T-cell (primary cell): ENCODE measurements at regions of chr7 and their contacts with region 1.

Region 1: DNA sequence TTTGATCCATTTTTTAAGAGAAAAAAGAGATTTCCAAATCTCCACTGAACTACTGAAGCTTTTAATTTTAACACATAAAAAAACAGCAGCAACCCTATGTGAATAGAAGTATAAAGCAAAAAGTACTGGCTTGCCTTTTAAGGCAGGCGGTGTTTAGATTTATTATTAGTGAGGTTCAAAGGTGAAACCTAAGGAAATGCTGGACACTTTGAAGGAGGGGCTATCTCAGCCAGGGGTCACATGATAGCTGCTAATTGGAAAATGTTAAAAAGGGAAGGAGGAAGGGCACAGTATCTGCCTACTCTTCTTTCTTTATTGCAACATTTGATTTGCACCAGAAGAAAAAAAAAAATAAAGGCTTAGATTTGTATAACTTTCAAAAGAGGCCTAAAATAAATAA is 183.8 kb downstream of the SKAP2 start:
- DNase-seq: no peak
- ATAC-seq: no peak
- H3K4me3 ChIP-seq: no peak overlapping the region
- H3K4me3 Mint-ChIP-seq: no peak overlapping the region
- H3K27ac ChIP-seq: no peak overlapping the region
- H3K27ac Mint-ChIP-seq: no peak overlapping the region
- H3K4me1 ChIP-seq: no peaks in the 10 kb centered on the region
- H3K4me1 Mint-ChIP-seq: no peaks in the 10 kb centered on the region
- H3K27me3 ChIP-seq: peaks cover 0 to 4% of the 10 kb centered on the region in 2 experiments
- H3K27me3 Mint-ChIP-seq: peaks cover 20 to 28% of the 10 kb centered on the region in 2 donors

Region 2: DNA sequence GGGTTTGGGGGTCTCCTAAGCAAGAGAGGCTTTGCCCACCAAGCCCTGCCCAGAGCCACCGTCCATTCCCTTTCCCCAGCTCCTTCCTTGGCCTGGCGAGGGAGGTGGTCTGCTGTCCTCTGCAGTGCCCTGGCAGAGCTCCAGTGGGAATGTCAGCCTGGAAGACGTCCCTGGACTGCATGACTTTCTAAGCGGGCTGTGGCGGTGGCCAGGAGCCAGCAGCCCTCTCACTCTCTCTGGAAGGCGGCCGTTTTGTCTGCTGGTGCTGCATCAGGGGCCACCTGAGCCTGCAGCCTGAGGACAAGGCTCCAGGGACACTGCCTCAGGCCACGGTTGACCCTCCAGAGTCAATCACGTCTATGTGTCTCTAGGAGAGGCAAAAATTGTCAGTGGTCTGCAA is 87.2 kb before region 1 on chr7:
- CTCF ChIA-PET with region 1: no interaction called
- POLR2A ChIA-PET with region 1: no interaction called
- DNase-seq: no peak
- ATAC-seq: no peak
- H3K4me3 ChIP-seq: no peak overlapping the region
- H3K4me3 Mint-ChIP-seq: no peak overlapping the region
- H3K27ac ChIP-seq: no peak overlapping the region
- H3K27ac Mint-ChIP-seq: no peak overlapping the region
- H3K4me1 ChIP-seq: no peaks in the 10 kb centered on the region
- H3K4me1 Mint-ChIP-seq: no peaks in the 10 kb centered on the region
- H3K27me3 ChIP-seq: peaks cover 0 to 9% of the 10 kb centered on the region in 2 experiments
- H3K27me3 Mint-ChIP-seq: peaks cover 2 to 20% of the 10 kb centered on the region in 2 donors

Region 3: DNA sequence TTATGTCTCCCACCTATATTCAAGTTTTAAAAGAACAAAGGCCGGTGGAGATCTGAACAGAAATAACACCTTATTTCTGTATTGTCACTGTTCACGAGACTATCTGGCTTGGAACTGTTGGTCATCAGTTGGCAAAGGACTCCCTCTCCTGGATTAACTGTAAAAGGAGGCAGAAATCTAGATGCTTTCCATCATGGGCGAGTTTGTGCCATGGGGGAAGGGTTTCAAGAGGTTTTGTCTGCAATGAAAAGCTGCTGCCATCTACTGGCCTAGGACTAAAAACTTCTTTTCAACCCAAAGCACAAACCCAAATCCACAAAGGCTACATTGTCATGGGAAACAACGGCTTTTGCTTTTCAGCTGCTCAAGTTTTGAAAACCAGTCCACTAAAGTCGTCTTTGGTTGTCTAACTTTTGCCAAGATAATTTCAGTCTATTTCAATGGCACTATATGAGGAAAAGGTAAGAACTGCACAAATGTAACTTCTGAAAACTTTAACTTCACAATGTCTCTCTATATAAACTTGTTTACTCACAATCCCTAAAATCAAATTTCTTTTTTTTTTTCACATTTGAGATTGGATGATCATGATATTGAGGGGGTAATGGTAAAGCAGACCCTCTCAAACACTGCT is 13.0 kb before region 1 on chr7:
- CTCF ChIA-PET with region 1: interaction called, 7 to 16 read pairs
- POLR2A ChIA-PET with region 1: interaction called in 1 of 2 experiments, 3 read pairs
- DNase-seq: peak in 33 of 35 experiments; percentile 3 to 79 (median 33)
- ATAC-seq: peak in 3 of 4 experiments; percentile 40 to 59 (median 58)
- H3K4me3 ChIP-seq: no peak overlapping the region
- H3K4me3 Mint-ChIP-seq: no peak overlapping the region
- H3K27ac ChIP-seq: no peak overlapping the region
- H3K27ac Mint-ChIP-seq: no peak overlapping the region
- H3K4me1 ChIP-seq: peaks cover 0 to 3% of the 10 kb centered on the region in 2 experiments
- H3K4me1 Mint-ChIP-seq: peaks cover 17 to 24% (median 20%) of the 10 kb centered on the region in 3 donors
- H3K27me3 ChIP-seq: no peaks in the 10 kb centered on the region
- H3K27me3 Mint-ChIP-seq: peaks cover 12 to 15% of the 10 kb centered on the region in 2 donors

Region 4: DNA sequence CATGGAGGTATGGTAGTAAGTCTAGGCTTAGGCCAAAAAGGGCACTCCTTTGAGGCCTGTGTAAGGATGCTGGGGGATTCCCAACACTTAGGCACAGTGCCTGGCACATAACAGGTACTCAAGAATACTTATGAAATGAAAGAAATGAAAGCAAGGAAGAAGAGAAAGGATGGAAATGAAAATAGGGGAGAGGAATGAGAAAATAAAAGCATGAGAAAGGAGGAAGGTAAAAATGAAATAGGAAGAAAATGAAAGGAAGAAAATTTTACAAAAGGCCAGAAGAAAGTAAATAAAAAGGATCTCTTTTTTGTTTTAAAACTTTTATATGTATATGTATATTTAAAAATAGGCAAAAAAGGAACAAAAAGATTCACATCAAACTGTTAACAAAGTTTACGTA is 37.5 kb after region 1 on chr7:
- CTCF ChIA-PET with region 1: no interaction called
- POLR2A ChIA-PET with region 1: no interaction called
- DNase-seq: no peak
- ATAC-seq: no peak
- H3K4me3 ChIP-seq: no peak overlapping the region
- H3K4me3 Mint-ChIP-seq: no peak overlapping the region
- H3K27ac ChIP-seq: no peak overlapping the region
- H3K27ac Mint-ChIP-seq: no peak overlapping the region
- H3K4me1 ChIP-seq: no peaks in the 10 kb centered on the region
- H3K4me1 Mint-ChIP-seq: no peaks in the 10 kb centered on the region
- H3K27me3 ChIP-seq: no peaks in the 10 kb centered on the region
- H3K27me3 Mint-ChIP-seq: peaks cover 0 to 3% of the 10 kb centered on the region in 2 donors

Region 5: DNA sequence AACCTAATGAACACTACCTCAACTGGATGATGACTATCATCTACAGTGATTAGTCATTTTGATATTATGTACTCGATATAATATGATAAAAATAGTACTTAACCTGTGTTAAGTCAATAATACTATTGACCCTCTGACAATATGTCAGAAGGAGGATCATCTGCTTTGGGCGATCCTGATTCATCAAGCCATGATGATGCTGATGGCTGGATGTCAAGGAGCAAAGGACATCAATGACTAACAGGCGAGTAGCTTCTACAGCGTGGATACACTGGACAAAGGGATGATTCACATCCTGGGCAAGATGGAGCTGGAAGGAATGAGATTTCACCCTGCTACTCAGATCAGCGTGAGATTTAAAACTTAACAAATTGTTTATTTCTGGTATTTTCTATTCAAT is 278.2 kb after region 1 on chr7:
- CTCF ChIA-PET with region 1: no interaction called
- POLR2A ChIA-PET with region 1: no interaction called
- DNase-seq: no peak
- ATAC-seq: no peak
- H3K4me3 ChIP-seq: no peak overlapping the region
- H3K4me3 Mint-ChIP-seq: no peak overlapping the region
- H3K27ac ChIP-seq: no peak overlapping the region
- H3K27ac Mint-ChIP-seq: no peak overlapping the region
- H3K4me1 ChIP-seq: no peaks in the 10 kb centered on the region
- H3K4me1 Mint-ChIP-seq: no peaks in the 10 kb centered on the region
- H3K27me3 ChIP-seq: no peaks in the 10 kb centered on the region
- H3K27me3 Mint-ChIP-seq: peaks cover 16% of the 10 kb centered on the region in 2 donors